Vagina (tissue), 2 donors: ENCODE measurements at regions of chr2 and their contacts with region 1.

Region 1: DNA sequence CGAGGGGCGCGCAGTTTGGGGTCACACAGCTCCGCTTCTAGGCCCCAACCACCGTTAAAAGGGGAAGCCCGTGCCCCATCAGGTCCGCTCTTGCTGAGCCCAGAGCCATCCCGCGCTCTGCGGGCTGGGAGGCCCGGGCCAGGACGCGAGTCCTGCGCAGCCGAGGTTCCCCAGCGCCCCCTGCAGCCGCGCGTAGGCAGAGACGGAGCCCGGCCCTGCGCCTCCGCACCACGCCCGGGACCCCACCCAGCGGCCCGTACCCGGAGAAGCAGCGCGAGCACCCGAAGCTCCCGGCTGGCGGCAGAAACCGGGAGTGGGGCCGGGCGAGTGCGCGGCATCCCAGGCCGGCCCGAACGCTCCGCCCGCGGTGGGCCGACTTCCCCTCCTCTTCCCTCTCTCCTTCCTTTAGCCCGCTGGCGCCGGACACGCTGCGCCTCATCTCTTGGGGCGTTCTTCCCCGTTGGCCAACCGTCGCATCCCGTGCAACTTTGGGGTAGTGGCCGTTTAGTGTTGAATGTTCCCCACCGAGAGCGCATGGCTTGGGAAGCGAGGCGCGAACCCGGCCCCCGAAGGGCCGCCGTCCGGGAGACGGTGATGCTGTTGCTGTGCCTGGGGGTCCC is at the start of gene ITGA4:
- DNase-seq: no peak
- H3K4me3 ChIP-seq: peak within 1 kb of the TSS; percentile 48 to 57
- H3K27ac ChIP-seq: peak within 1 kb of the TSS; percentile 48
- H3K4me1 ChIP-seq: peaks cover 20% of the 10 kb centered on the region
- H3K27me3 ChIP-seq: no peaks in the 10 kb centered on the region
- CTCF ChIP-seq: peak in 2 of 3 experiments; percentile 25 to 62
- POLR2A ChIP-seq: no peak
- total RNA-seq, gene ITGA4: 4.9 TPM

Region 2: DNA sequence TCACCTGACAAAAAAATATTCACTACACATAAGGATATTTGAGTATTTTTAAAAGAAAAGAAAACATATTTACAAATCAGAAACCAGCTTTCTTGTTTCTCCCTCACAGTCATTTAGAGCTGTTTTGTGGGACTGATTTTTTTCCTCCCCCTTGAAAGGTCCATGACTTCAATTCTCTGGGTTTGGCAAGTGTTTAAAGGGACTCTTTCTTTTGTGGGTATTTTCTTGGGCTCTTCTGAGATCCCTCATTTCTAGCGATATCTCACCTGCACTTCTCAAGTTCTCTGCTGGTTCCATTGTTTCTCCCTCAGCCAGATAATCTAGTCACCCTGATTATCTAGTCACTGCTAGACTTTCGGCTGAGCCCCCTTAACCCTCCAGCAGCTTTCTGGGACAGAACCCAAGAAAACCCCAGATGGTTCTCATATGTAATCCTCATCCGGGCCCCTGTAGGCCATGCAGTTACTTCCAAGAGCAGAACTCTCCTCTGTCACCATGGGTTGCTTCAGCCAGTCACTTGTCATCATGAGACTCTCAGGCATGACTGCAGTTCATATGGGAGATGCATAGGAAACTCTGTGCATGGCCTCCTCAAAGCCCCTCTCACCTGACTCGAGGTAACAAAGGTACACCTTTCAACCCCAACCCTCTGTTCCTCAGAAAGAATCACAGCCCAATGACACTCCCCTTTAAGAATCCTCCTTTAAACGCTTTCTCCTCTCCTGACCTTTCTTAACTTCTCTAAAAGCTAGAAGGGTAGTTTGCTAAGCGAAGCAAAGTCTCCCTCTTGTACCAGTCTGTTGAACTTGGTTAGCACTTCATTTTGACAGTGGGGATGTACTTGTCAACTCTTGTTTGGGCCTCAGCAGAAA is 36.7 kb before region 1 on chr2:
- intact Hi-C with region 1: loop called (anchors 1 kb)
- DNase-seq: no peak
- H3K4me3 ChIP-seq: no peak overlapping the region
- H3K27ac ChIP-seq: no peak overlapping the region
- H3K4me1 ChIP-seq: no peaks in the 10 kb centered on the region
- H3K27me3 ChIP-seq: no peaks in the 10 kb centered on the region
- CTCF ChIP-seq: no peak
- POLR2A ChIP-seq: no peak

Region 3: GRCh38 chr2:181430406-181431118 is 26.7 kb before region 1 on chr2:
- intact Hi-C with region 1: no loop called
- DNase-seq: no peak
- H3K4me3 ChIP-seq: no peak overlapping the region
- H3K27ac ChIP-seq: no peak overlapping the region
- H3K4me1 ChIP-seq: no peaks in the 10 kb centered on the region
- H3K27me3 ChIP-seq: no peaks in the 10 kb centered on the region
- CTCF ChIP-seq: no peak
- POLR2A ChIP-seq: no peak

Region 4: GRCh38 chr2:181517685-181518301 is 60.6 kb after region 1 on chr2:
- intact Hi-C with region 1: no loop called
- DNase-seq: no peak
- H3K4me3 ChIP-seq: no peak overlapping the region
- H3K27ac ChIP-seq: no peak overlapping the region
- H3K4me1 ChIP-seq: no peaks in the 10 kb centered on the region
- H3K27me3 ChIP-seq: no peaks in the 10 kb centered on the region
- CTCF ChIP-seq: no peak
- POLR2A ChIP-seq: no peak